HCT116 (cell line): ENCODE measurements at regions of chr6 and their contacts with region 1.

Region 1: GRCh38 chr6:151060096-151060765 is 179.5 kb upstream of the AKAP12 start:
- DNase-seq: peak; percentile 98
- ATAC-seq: peak; percentile 80
- H3K4me3 ChIP-seq: peak overlapping the region in 1 of 2 experiments; percentile 3; a peak in 2 of 4 replicates
- H3K27ac ChIP-seq: peak overlapping the region; percentile 100
- H3K4me1 ChIP-seq: peaks cover 89 to 95% of the 10 kb centered on the region in 2 experiments
- H3K27me3 ChIP-seq: no peaks in the 10 kb centered on the region
- CTCF ChIP-seq: no peak
- POLR2A ChIP-seq: no peak
- RAD21 ChIP-seq: no peak

Region 2: DNA sequence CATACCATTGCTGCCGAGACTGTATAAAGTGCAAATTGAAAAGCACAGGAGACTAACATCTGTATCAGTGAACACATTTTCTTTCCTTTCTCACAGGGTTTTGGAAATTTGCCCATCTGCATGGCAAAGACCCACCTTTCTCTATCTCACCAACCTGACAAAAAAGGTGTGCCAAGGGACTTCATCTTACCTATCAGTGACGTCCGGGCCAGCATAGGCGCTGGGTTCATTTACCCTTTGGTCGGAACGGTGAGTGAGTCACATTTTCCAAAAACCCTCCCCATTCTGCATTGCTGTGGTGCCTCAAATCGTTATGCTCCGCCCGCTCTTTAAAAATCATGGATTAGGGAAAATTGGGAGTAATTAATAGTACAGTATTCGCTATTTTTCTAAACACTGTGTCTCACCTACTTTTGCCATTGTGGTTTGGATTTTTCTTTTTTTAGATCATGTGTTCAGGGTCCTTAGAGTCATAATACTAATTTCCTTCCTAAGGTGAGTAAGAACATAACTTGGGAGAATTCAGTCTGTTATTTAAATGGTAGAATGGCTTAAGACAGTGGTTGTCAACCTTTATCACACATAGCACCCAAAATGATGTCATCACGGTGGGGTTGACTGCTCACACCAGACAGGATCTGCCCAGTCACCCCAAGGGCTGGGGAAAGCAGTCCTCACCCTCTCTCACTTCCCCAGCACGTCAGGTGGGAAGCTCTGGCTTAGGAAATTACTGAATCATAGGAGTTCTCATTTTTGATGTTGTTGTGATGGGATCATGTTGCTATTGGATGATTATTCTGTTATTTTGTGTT is 23.2 kb before region 1 on chr6:
- CTCF ChIA-PET with region 1: no interaction called
- POLR2A ChIA-PET with region 1: interaction called, 36 read pairs
- RAD21 ChIA-PET with region 1: no interaction called
- intact Hi-C with region 1: loop called (anchors 1 kb)
- DNase-seq: peak; percentile 64
- ATAC-seq: no peak
- H3K4me3 ChIP-seq: no peak overlapping the region
- H3K27ac ChIP-seq: peak overlapping the region; percentile 91
- H3K4me1 ChIP-seq: peaks cover 58 to 99% of the 10 kb centered on the region in 2 experiments
- H3K27me3 ChIP-seq: no peaks in the 10 kb centered on the region
- CTCF ChIP-seq: no peak
- POLR2A ChIP-seq: no peak
- RAD21 ChIP-seq: no peak

Region 3: DNA sequence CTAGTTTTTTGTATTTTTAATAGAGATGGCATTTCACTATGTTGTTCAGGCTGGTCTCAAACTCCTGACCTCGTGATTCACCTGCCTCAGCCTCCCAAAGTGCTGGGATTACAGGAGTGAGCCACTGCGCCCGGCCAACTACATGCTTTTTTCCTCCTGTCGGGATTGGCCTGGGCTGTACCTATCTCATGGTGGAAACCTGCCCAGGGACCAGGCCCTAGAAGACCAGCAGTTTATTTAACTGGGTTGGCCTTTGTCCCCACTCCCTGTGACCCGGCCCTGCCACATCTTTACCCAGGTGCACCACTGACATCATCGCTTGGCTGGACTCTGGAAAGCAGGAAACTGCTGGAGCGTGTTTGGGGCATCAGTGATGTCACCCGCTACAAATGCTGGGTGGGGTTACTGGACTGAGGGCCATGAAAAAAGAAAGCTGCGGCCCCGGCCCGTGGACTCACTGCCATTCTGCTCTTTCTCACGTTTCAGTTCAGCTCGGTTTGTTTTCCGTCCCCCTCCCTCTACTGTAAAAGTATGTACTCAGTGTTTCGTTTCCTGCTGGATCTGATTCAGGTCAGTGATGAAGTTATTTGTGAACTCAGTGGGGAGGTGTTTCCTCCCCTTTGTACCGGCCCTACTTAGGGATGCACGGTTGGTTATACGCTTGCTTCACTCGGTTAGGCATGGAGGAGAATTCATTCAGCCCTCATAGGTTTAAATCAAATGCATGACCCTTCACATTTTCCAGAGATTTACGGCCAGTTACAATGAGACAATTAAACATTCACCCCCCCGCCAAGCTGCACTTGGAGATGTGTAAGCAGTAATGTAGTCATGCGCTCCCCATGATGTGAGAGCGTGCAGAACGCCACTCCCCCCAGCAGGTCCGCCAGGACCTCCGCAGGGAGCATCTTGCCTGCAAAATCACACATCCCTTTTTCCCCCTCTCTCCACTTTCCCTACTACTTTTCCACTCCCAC is 15.5 kb before region 1 on chr6:
- CTCF ChIA-PET with region 1: no interaction called
- POLR2A ChIA-PET with region 1: interaction called, 36 read pairs
- RAD21 ChIA-PET with region 1: no interaction called
- intact Hi-C with region 1: loop called (anchors 1 kb)
- DNase-seq: peak; percentile 82
- ATAC-seq: peak; percentile 49
- H3K4me3 ChIP-seq: peak overlapping the region; percentile 37 to 38
- H3K27ac ChIP-seq: peak overlapping the region; percentile 91
- H3K4me1 ChIP-seq: peaks cover 58 to 86% of the 10 kb centered on the region in 2 experiments
- H3K27me3 ChIP-seq: no peaks in the 10 kb centered on the region
- CTCF ChIP-seq: no peak
- POLR2A ChIP-seq: no peak
- RAD21 ChIP-seq: no peak

Region 4: GRCh38 chr6:151128763-151129370 is 68.6 kb after region 1 on chr6:
- CTCF ChIA-PET with region 1: no interaction called
- POLR2A ChIA-PET with region 1: no interaction called
- RAD21 ChIA-PET with region 1: no interaction called
- intact Hi-C with region 1: loop called (anchors 5 kb)
- DNase-seq: no peak
- ATAC-seq: no peak
- H3K4me3 ChIP-seq: no peak overlapping the region
- H3K27ac ChIP-seq: no peak overlapping the region
- H3K4me1 ChIP-seq: peaks cover 20 to 50% of the 10 kb centered on the region in 2 experiments
- H3K27me3 ChIP-seq: no peaks in the 10 kb centered on the region
- CTCF ChIP-seq: no peak
- POLR2A ChIP-seq: no peak
- RAD21 ChIP-seq: no peak